Activated CD4-positive, alpha-beta T cell treated with anti-CD3 and anti-CD28 coated beads for 36 hours (primary cell): ENCODE measurements at regions of chr11 and their contacts with region 1.

Region 1: GRCh38 chr11:71928737-71929452 is at the start of gene RNF121:
- DNase-seq: peak; percentile 99
- ATAC-seq: peak; percentile 87
- H3K4me3 Mint-ChIP-seq: peak within 1 kb of the TSS; percentile 96
- H3K27ac Mint-ChIP-seq: peak within 1 kb of the TSS; percentile 100
- H3K4me1 Mint-ChIP-seq: peaks cover 50% of the 10 kb centered on the region
- H3K27me3 Mint-ChIP-seq: no peaks in the 10 kb centered on the region
- total RNA-seq, gene RNF121: 28.7 to 29.5 TPM

Region 2: GRCh38 chr11:71518506-71519471 is 410.1 kb before region 1 on chr11:
- CTCF ChIA-PET with region 1: no interaction called
- POLR2A ChIA-PET with region 1: no interaction called
- intact Hi-C with region 1: no loop called
- DNase-seq: no peak
- ATAC-seq: no peak
- H3K4me3 Mint-ChIP-seq: no peak overlapping the region
- H3K27ac Mint-ChIP-seq: no peak overlapping the region
- H3K4me1 Mint-ChIP-seq: no peaks in the 10 kb centered on the region
- H3K27me3 Mint-ChIP-seq: no peaks in the 10 kb centered on the region

Region 3: DNA sequence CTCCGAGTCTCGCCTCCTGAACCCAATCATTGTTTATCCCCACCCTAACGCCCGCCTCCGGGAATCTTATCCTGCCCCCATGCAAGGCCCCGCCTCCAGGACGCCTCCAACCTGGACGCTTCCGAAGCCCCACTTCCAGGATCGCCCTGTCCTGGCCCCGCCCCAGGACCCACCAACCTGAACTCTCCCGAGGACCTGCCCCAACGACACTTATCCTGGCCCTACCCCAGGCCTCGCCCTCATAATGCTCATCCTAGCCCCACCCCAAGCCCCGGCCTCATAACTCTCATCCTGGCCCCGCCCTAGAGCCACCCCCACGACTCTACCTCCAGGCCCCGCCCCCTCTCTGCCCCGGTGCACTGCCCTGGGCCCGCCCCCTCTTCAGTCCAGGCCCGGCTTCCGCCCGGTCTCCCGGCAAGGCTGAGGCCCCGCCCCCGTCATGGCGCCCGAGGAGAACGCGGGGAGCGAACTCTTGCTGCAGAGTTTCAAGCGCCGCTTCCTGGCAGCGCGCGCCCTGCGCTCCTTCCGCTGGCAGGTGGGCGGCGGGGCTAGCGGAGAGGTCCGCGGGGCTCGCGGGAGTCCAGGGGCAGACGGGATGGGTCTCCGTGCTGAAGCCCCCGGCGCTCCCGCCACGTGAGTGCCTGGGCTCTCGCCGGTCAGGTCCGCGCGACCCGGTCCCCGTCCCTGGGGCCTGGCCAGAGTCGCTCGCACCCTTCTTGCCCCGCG is 141.6 kb before region 1 on chr11:
- CTCF ChIA-PET with region 1: no interaction called
- POLR2A ChIA-PET with region 1: no interaction called
- intact Hi-C with region 1: loop called (anchors 1 to 5 kb)
- DNase-seq: peak; percentile 97
- ATAC-seq: peak; percentile 97
- H3K4me3 Mint-ChIP-seq: peak overlapping the region; percentile 84
- H3K27ac Mint-ChIP-seq: peak overlapping the region; percentile 95
- H3K4me1 Mint-ChIP-seq: peaks cover 24% of the 10 kb centered on the region
- H3K27me3 Mint-ChIP-seq: no peaks in the 10 kb centered on the region

Region 4: DNA sequence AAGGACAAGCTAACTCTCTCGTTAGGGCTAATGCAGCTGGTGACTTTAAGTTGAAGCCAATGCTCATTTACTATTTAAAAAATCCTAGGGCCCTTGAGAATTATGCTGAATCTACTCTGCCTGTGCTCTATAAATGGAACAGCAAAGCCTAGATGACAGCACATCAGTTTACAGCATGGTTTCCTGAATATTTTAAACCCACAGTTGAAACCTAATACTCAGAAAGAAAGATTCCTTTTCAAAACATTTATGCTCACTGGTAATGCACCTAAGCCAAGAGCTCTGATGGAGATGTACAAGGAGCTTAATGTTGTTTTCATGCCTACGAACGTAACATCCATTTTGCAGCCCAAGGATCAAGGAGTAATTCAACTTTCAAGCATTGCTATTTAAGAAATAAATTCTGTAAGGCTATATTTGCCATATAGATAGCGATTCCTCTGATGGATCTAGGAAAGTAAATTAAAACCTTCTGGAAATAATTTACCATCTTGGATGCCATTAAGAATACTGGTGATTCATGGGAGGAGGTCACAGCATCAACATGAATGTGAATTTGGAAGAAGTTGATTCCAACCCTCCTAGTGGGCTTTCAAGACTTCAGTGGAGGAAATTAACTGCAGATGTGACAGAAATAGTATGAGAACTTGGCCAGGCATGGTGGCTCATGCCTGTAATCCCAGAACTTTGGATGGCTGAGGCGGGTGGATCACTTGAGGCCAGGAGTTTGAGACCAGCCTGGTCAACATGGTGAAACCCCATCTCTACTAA is 15.0 kb before region 1 on chr11:
- CTCF ChIA-PET with region 1: interaction called, 11 read pairs
- POLR2A ChIA-PET with region 1: interaction called, 5 read pairs
- intact Hi-C with region 1: no loop called
- DNase-seq: no peak
- ATAC-seq: no peak
- H3K4me3 Mint-ChIP-seq: no peak overlapping the region
- H3K27ac Mint-ChIP-seq: no peak overlapping the region
- H3K4me1 Mint-ChIP-seq: peaks cover 18% of the 10 kb centered on the region
- H3K27me3 Mint-ChIP-seq: no peaks in the 10 kb centered on the region

Region 5: GRCh38 chr11:71962428-71963038 is 33.6 kb after region 1 on chr11:
- CTCF ChIA-PET with region 1: interaction called, 6 read pairs
- POLR2A ChIA-PET with region 1: no interaction called
- intact Hi-C with region 1: loop called in 1 of 2 experiments (anchors 2 kb)
- DNase-seq: no peak
- ATAC-seq: peak; percentile 92
- H3K4me3 Mint-ChIP-seq: no peak overlapping the region
- H3K27ac Mint-ChIP-seq: peak overlapping the region; percentile 60
- H3K4me1 Mint-ChIP-seq: peaks cover 25% of the 10 kb centered on the region
- H3K27me3 Mint-ChIP-seq: no peaks in the 10 kb centered on the region

Region 6: DNA sequence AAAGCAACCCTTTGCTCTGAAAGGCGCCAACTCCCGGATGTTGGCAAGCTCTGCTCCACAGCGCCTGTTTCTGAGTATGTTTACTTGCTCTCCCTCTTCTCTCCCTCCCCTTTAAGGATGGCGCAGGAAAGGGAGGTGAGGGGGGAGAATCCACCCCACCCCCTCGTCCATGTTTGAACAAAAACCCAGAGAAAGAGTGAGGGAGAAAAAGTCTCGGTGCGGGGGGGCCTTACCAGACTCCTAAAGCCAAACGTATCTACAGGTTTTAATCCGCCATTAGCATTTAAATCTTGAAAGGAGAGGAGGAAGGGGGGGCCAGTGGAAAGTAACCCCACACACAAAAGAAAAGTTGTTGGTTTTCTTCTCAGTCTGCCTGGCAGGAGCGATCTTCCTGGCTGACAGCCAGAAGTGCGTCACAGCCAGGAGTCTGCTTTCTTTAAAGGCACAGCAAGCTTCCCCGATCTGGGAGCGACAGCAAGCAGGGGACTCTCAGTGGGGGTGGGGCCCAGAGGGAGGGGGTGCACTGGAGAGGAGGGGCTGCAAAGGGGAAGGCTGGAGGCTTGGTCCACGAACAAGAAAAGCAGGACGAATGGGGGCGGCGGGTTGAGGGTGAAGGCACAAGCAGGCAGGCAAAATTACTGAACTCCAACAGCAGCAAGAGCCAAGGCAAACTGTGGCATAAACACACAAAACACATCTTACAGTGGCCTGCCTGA is 112.0 kb after region 1 on chr11:
- CTCF ChIA-PET with region 1: interaction called, 3 read pairs
- POLR2A ChIA-PET with region 1: no interaction called
- intact Hi-C with region 1: loop called in 1 of 2 experiments (anchors 1 kb)
- DNase-seq: peak; percentile 86
- ATAC-seq: peak; percentile 76
- H3K4me3 Mint-ChIP-seq: no peak overlapping the region
- H3K27ac Mint-ChIP-seq: no peak overlapping the region
- H3K4me1 Mint-ChIP-seq: peaks cover 35% of the 10 kb centered on the region
- H3K27me3 Mint-ChIP-seq: no peaks in the 10 kb centered on the region

Region 7: GRCh38 chr11:72102946-72103753 is 174.3 kb after region 1 on chr11 and contains the start of gene LAMTOR1:
- CTCF ChIA-PET with region 1: no interaction called
- POLR2A ChIA-PET with region 1: interaction called, 3 read pairs
- intact Hi-C with region 1: loop called (anchors 1 to 2 kb)
- DNase-seq: peak; percentile 99
- ATAC-seq: peak; percentile 98
- H3K4me3 Mint-ChIP-seq: peak within 1 kb of the TSS; percentile 97
- H3K27ac Mint-ChIP-seq: peak within 1 kb of the TSS; percentile 95
- H3K4me1 Mint-ChIP-seq: peaks cover 38% of the 10 kb centered on the region
- H3K27me3 Mint-ChIP-seq: no peaks in the 10 kb centered on the region
- total RNA-seq, gene LAMTOR1: 50.7 to 52.2 TPM

Region 8: DNA sequence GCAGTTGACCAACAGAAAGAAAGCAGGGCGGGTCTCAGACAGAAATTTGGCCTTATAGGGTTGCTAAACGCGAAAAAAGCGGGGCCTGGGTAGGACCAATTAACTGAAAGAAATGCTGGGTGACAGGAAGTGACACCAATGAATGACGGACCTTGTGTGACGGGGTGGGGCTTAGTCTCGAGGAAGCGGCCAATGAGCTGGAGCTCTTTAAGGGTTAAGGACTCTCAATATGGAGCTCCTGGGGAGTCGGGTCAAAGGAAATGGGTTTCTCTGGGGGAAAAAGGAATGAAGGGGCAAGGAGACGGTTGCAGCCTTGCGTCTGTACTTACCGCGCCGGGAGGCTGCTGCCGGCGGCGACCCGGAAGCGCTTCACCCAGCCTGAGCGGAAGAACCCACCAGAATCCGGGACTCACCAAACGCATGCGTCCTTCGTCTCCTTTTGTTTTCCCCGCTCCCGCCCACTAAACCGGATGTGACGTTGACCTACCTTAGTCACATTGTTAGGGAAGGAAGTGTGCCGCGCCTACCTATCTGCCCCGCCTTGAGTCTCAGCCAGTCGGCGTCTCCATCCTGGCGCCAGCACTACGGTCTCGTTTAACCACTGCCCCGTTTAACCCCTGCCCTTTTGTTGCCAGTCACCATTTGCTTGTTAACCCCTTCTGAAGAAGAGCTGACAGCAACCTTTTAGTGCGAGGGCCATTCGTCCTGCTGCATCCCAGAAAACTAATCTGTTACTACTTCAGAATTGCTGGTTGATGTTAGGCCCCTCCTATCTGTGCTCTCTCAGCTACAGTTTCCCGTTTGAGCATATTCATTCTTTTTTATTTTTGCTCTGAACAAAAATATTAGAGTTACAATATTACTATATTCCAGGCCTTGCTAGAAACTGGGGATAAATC is 183.7 kb after region 1 on chr11 and contains the start of gene ANAPC15:
- CTCF ChIA-PET with region 1: interaction called, 3 read pairs
- POLR2A ChIA-PET with region 1: interaction called, 3 read pairs
- intact Hi-C with region 1: loop called (anchors 1 kb)
- DNase-seq: peak; percentile 100
- ATAC-seq: peak; percentile 89
- H3K4me3 Mint-ChIP-seq: peak within 1 kb of the TSS; percentile 92
- H3K27ac Mint-ChIP-seq: peak within 1 kb of the TSS; percentile 98
- H3K4me1 Mint-ChIP-seq: peaks cover 16% of the 10 kb centered on the region
- H3K27me3 Mint-ChIP-seq: no peaks in the 10 kb centered on the region
- total RNA-seq, gene ANAPC15: 60.3 to 76.1 TPM